ENCODE measurements at regions of chr11 and their contacts with region 1.

Region 1: GRCh38 chr11:102666331-102666957 is 39.1 kb downstream of the MMP27 start:
- DNase-seq: peak; percentile 34
- H3K4me3 ChIP-seq: no peak overlapping the region; a peak in 1 of 4 replicates
- H3K27ac ChIP-seq: no peak overlapping the region
- H3K4me1 ChIP-seq: no peaks in the 10 kb centered on the region
- H3K27me3 ChIP-seq: no peaks in the 10 kb centered on the region
- CTCF ChIP-seq: peak; percentile 88
- EP300 ChIP-seq: no peak
- RAD21 ChIP-seq: peak; percentile 80

Region 2: GRCh38 chr11:102464859-102465500 is 201.5 kb before region 1 on chr11:
- CTCF ChIA-PET with region 1: no interaction called
- POLR2A ChIA-PET with region 1: no interaction called
- DNase-seq: no peak
- H3K4me3 ChIP-seq: no peak overlapping the region
- H3K27ac ChIP-seq: no peak overlapping the region
- H3K4me1 ChIP-seq: peaks cover 4 to 5% of the 10 kb centered on the region in 2 experiments; a peak in 2 of 4 replicates
- H3K27me3 ChIP-seq: no peaks in the 10 kb centered on the region
- CTCF ChIP-seq: no peak
- EP300 ChIP-seq: no peak
- RAD21 ChIP-seq: no peak

Region 3: DNA sequence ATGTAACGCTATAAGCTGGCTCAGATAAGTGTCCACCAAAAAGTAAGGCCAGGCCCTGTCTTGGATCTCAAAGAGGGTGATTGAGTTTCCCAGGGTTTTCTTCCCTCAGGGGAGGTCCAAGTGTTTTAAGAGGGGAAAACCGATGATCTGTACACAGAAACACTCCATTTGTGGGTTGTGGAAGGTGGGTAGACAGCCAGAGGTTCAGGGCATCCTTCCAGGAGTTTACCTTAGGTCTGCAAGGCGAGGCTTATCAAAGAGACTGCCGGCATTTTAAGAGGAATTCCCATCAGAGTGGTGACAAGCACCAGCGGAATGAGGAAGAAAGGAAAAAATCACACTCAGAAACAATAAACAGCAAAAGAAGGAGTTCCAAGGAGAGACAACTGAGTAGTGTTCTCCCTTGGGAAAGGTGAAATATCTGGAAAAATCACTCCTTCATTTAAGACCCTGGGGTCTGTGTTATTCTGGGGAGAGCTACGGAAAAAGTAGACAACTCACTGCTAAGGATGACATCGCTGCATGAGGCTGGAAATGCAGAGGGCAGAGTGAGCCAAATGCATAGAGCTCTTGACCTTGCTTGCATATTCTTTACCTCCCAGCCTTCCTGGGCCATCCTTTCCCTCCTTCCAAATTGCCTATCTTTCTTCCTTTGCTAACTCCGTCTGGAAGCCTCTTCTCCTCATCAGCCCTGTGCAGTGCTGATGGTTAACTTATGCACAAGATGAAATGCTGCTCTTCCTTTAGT is 113.8 kb before region 1 on chr11:
- CTCF ChIA-PET with region 1: no interaction called
- POLR2A ChIA-PET with region 1: no interaction called
- DNase-seq: no peak
- H3K4me3 ChIP-seq: no peak overlapping the region
- H3K27ac ChIP-seq: no peak overlapping the region
- H3K4me1 ChIP-seq: no peaks in the 10 kb centered on the region
- H3K27me3 ChIP-seq: no peaks in the 10 kb centered on the region
- CTCF ChIP-seq: no peak
- EP300 ChIP-seq: no peak
- RAD21 ChIP-seq: no peak

Region 4: DNA sequence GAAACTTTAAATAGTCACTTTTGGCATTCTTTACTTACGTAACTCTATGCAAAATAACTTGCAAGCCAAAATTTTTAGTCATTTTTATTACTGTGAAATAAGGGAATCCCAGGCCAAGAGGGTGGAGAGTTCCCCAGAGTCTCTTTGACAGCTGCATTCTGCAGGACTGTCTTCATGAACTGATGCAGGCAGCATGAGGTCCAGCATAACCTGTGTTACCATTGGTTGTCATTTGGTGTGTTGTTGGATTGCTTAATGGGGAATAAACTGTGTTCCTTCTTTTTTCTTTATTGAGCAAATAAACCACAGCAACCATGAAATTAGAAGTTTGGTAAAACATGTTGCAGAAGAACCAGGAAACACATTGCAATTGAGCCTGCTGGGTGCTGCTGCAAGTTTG is 14.5 kb after region 1 on chr11:
- CTCF ChIA-PET with region 1: interaction called, 24 read pairs
- POLR2A ChIA-PET with region 1: no interaction called
- DNase-seq: no peak
- H3K4me3 ChIP-seq: no peak overlapping the region
- H3K27ac ChIP-seq: no peak overlapping the region
- H3K4me1 ChIP-seq: no peaks in the 10 kb centered on the region
- H3K27me3 ChIP-seq: peaks cover 4% of the 10 kb centered on the region
- CTCF ChIP-seq: no peak
- EP300 ChIP-seq: no peak
- RAD21 ChIP-seq: no peak